Right cardiac atrium (tissue), 5 donors: ENCODE measurements at regions of chr12 and their contacts with region 1.

Region 1: GRCh38 chr12:71780237-71780822 is 25.7 kb downstream of the RAB21 start:
- DNase-seq: peak in 2 of 3 donors; percentile 27 to 52
- ATAC-seq: peak in 1 of 2 donors; percentile 32
- H3K4me3 ChIP-seq: no peak overlapping the region
- H3K27ac ChIP-seq: no peak overlapping the region
- H3K4me1 ChIP-seq: no peaks in the 10 kb centered on the region
- H3K27me3 ChIP-seq: no peaks in the 10 kb centered on the region

Region 2: GRCh38 chr12:71840231-71840847 is 60.0 kb after region 1 on chr12:
- intact Hi-C with region 1: loop called in 2 of 4 experiments (anchors 5 to 10 kb)
- DNase-seq: no peak
- ATAC-seq: peak in 1 of 2 donors; percentile 73
- H3K4me3 ChIP-seq: peak overlapping the region; percentile 89
- H3K27ac ChIP-seq: peak overlapping the region; percentile 97
- H3K4me1 ChIP-seq: peaks cover 2% of the 10 kb centered on the region
- H3K27me3 ChIP-seq: no peaks in the 10 kb centered on the region

Region 3: GRCh38 chr12:71846322-71846940 is 66.1 kb after region 1 on chr12:
- intact Hi-C with region 1: loop called in 2 of 4 experiments (anchors 5 to 10 kb)
- DNase-seq: no peak
- ATAC-seq: no peak
- H3K4me3 ChIP-seq: no peak overlapping the region
- H3K27ac ChIP-seq: no peak overlapping the region
- H3K4me1 ChIP-seq: peaks cover 5% of the 10 kb centered on the region
- H3K27me3 ChIP-seq: no peaks in the 10 kb centered on the region